ENCODE measurements at regions of chr4 and their contacts with region 1.

Region 1: GRCh38 chr4:55592014-55592413 is at the start of gene PDCL2:
- DNase-seq: no peak
- H3K4me3 ChIP-seq: no peak within 1 kb of the TSS
- H3K27ac ChIP-seq: no peak within 1 kb of the TSS
- H3K4me1 ChIP-seq: no peaks in the 10 kb centered on the region
- H3K27me3 ChIP-seq: no peaks in the 10 kb centered on the region
- CTCF ChIP-seq: no peak
- total RNA-seq, gene PDCL2: not detected in 2 replicates

Region 2: GRCh38 chr4:54971474-54971950 is 620.5 kb before region 1 on chr4:
- CTCF ChIA-PET with region 1: no interaction called
- POLR2A ChIA-PET with region 1: no interaction called
- intact Hi-C with region 1: no loop called
- DNase-seq: peak in 1 of 2 experiments; percentile 2
- H3K4me3 ChIP-seq: no peak overlapping the region
- H3K27ac ChIP-seq: no peak overlapping the region
- H3K4me1 ChIP-seq: no peaks in the 10 kb centered on the region
- H3K27me3 ChIP-seq: no peaks in the 10 kb centered on the region
- CTCF ChIP-seq: peak; percentile 88

Region 3: DNA sequence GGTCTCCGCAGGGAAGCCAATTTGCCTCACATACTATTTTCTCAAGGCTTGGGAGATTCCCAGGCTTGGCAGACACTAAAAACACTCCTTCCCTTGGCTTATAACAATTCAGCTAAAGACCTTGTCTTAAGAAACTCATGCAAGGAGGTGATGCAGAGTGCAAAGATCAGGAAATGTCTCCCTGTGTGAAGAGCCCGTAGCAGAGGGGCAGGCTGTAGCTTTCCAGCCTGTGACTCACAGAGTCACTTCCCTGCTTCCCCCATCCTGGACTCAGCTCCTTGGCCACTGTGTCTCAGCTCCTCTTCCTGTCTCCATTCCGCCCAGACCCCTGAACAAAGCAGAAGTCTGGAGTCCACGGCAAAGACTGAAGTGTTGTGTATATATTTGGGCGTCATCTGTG is 522.8 kb before region 1 on chr4:
- CTCF ChIA-PET with region 1: no interaction called
- POLR2A ChIA-PET with region 1: no interaction called
- intact Hi-C with region 1: no loop called
- DNase-seq: no peak
- H3K4me3 ChIP-seq: no peak overlapping the region
- H3K27ac ChIP-seq: no peak overlapping the region
- H3K4me1 ChIP-seq: no peaks in the 10 kb centered on the region
- H3K27me3 ChIP-seq: no peaks in the 10 kb centered on the region
- CTCF ChIP-seq: no peak

Region 4: DNA sequence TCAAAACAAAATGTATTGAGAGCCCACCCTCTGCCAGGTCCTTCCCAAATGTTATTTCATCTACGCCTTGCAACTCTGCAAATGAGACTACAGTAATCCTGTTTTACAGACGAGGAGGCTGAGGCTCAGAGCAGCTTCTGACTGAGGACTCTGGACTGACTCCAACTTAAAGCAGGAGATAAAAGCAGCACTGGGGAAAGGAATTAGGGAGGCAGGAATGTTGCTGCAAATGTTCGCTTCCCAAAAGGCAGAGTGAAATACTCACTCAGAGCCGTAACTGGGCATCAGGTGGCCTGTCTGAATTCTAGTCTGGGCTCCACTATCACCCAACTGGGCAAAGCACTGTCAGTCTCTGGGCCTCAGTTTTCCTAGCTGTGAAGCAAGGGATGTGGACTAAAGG is 340.7 kb before region 1 on chr4:
- CTCF ChIA-PET with region 1: no interaction called
- POLR2A ChIA-PET with region 1: no interaction called
- intact Hi-C with region 1: no loop called
- DNase-seq: no peak
- H3K4me3 ChIP-seq: no peak overlapping the region
- H3K27ac ChIP-seq: no peak overlapping the region
- H3K4me1 ChIP-seq: no peaks in the 10 kb centered on the region
- H3K27me3 ChIP-seq: no peaks in the 10 kb centered on the region
- CTCF ChIP-seq: no peak

Region 5: GRCh38 chr4:55887594-55887993 is 295.6 kb after region 1 on chr4:
- CTCF ChIA-PET with region 1: interaction called, 14 read pairs
- POLR2A ChIA-PET with region 1: no interaction called
- intact Hi-C with region 1: no loop called
- DNase-seq: no peak
- H3K4me3 ChIP-seq: no peak overlapping the region
- H3K27ac ChIP-seq: no peak overlapping the region
- H3K4me1 ChIP-seq: no peaks in the 10 kb centered on the region
- H3K27me3 ChIP-seq: no peaks in the 10 kb centered on the region
- CTCF ChIP-seq: no peak